ENCODE measurements at regions of chr12 and their contacts with region 1.

Region 1: DNA sequence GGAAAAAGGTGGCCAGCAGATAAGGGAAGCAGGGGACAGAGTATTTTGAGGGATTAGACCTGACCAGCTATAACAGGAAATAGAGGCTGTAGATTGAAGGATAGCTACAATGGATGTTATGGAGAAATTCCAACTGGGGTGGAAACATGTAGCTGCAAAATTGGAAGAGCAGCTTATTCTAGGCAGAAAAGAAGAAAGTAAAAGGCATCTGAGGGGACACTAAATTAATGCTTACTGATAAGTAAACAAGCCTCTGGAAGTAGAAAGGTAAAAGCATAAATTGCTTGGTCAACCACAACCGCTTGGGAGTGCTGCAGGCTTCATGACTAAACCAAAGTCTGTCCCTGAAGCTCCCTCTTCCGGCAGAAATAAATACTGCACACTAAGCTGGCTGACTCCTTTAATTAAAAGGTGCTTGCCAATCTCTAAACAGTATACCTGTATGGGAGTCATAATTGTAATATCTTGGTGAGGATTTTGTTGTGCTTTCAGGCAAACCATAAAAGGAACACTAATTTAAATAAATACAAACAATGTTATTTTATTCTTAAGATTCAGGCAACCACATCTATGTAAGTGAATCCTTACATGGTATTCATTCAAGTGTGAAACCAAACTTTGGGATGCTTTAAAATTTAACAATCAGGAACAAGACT is 7.7 kb downstream of the UBC start:
- DNase-seq: peak; percentile 90
- ATAC-seq: peak; percentile 56
- H3K4me3 ChIP-seq: no peak overlapping the region
- H3K27ac ChIP-seq: no peak overlapping the region
- H3K4me1 ChIP-seq: peaks cover 12% of the 10 kb centered on the region
- H3K27me3 ChIP-seq: no peaks in the 10 kb centered on the region
- CTCF ChIP-seq: peak; percentile 100
- POLR2A ChIP-seq: no peak
- RAD21 ChIP-seq: peak; percentile 92

Region 2: DNA sequence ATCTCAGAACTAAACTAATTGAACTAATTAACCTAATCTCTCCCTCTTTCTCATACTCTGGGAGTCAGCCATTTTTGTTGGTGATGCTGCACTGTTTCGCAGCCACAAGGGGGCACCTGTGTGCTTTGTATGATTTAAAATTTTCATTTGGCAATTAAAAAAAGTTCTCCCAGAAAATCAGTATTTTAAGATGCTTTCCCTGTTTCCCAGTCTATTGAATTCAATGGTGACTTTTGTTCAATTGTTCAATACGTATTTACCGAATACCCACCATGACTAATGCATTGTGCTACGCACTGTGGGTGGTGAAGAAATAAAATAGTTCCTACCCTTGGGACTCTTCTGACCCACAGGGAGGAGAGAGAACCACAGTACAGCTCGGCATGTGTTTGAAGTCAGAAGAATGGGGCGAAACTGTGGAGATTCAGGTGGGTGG is 870.0 kb before region 1 on chr12:
- CTCF ChIA-PET with region 1: interaction called, 3 read pairs
- POLR2A ChIA-PET with region 1: no interaction called
- dilution Hi-C with region 1: no loop called
- in situ Hi-C with region 1: loop called (anchors 5 kb)
- intact Hi-C with region 1: loop called (anchors 1 kb)
- DNase-seq: peak; percentile 44
- ATAC-seq: peak; percentile 62
- H3K4me3 ChIP-seq: no peak overlapping the region
- H3K27ac ChIP-seq: no peak overlapping the region
- H3K4me1 ChIP-seq: no peaks in the 10 kb centered on the region
- H3K27me3 ChIP-seq: no peaks in the 10 kb centered on the region
- CTCF ChIP-seq: peak; percentile 96
- POLR2A ChIP-seq: no peak
- RAD21 ChIP-seq: peak; percentile 90

Region 3: DNA sequence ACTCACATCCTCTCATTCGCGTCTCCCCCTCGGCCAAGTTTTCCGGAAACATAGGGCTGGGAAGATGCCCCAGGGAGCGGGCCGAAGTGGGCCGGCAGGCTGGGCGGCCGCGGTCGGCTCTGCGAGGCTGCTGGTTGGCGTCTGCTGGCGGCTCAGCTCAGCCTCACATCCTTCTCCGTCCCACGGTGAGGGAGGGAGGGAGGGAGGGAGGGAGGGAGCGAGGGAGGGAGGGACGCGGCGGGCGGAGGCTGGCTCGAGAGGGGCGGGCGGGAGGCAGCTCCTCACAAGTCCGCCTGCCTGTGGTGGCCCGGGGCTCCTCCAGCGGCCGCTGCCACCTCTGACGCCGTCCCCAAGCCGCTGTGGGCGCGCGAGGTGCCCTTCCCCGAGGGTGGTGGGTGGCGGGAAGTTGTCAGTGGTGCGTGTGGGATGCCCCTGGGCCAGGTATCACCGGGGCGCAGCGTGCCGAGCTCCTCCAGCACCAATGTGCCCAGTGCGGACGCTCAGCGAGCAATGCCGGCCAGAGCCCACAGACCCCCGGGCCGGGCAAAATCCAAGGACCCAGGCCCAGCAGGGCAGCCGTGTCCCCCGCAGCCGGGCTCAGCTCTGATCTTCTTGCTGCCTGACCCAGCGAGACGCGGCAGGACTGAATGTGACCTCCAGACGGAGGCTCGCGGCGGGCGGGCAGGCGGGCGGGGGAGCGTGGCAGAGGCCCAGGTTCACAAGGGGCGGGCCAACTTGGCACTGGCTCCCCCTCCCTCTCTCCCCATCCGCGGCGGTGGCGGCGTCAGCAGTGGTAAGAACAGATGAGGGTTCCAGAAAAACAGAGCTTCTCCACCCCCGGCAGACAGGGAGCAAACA is 517.8 kb before region 1 on chr12:
- CTCF ChIA-PET with region 1: no interaction called
- POLR2A ChIA-PET with region 1: no interaction called
- dilution Hi-C with region 1: no loop called
- in situ Hi-C with region 1: no loop called
- intact Hi-C with region 1: loop called (anchors 10 kb)
- DNase-seq: peak; percentile 85
- ATAC-seq: peak; percentile 65
- H3K4me3 ChIP-seq: peak overlapping the region; percentile 97
- H3K27ac ChIP-seq: peak overlapping the region; percentile 98
- H3K4me1 ChIP-seq: peaks cover 62% of the 10 kb centered on the region
- H3K27me3 ChIP-seq: no peaks in the 10 kb centered on the region
- CTCF ChIP-seq: no peak
- POLR2A ChIP-seq: peak; percentile 94
- RAD21 ChIP-seq: peak; percentile 9; the same call in 1 of the 2 replicates

Region 4: DNA sequence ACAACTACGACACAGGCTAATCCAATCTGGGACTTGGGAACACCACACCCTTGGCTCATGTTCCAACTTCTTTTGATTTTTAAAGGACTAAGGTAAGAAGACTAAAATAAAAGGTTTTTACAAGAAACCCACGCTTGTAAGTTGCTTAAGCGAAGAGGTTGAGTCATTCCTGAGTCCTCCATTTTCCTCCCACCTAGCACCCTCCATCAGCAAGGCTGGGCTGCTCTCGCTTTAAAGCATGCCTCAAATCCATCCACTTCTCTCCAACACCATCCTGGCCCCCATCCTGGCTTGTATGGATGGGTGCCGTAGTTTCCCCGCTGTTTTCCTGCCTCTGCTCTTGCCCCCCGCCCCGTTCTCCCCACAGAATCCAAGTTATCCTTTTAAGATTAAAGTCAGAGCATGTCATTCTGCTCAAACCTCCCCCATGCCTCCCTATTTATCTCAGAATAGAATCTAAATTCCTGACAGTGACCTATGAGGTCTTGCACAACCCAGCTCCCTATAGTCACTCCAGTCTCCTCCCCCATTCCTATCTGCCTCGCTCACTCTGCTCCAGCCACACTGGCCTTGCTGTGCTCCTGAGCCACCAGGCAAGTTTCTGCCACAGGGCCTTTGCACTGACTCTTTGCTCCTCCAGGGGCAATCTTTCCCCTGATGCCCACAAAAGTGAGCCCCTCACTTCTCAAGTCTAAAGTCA is 77.6 kb before region 1 on chr12:
- CTCF ChIA-PET with region 1: interaction called, 3 read pairs
- POLR2A ChIA-PET with region 1: no interaction called
- dilution Hi-C with region 1: no loop called
- in situ Hi-C with region 1: no loop called
- intact Hi-C with region 1: loop called (anchors 10 kb)
- DNase-seq: peak; percentile 85
- ATAC-seq: peak; percentile 84
- H3K4me3 ChIP-seq: no peak overlapping the region
- H3K27ac ChIP-seq: peak overlapping the region; percentile 72
- H3K4me1 ChIP-seq: peaks cover 11% of the 10 kb centered on the region
- H3K27me3 ChIP-seq: no peaks in the 10 kb centered on the region
- CTCF ChIP-seq: no peak
- POLR2A ChIP-seq: no peak
- RAD21 ChIP-seq: no peak

Region 5: DNA sequence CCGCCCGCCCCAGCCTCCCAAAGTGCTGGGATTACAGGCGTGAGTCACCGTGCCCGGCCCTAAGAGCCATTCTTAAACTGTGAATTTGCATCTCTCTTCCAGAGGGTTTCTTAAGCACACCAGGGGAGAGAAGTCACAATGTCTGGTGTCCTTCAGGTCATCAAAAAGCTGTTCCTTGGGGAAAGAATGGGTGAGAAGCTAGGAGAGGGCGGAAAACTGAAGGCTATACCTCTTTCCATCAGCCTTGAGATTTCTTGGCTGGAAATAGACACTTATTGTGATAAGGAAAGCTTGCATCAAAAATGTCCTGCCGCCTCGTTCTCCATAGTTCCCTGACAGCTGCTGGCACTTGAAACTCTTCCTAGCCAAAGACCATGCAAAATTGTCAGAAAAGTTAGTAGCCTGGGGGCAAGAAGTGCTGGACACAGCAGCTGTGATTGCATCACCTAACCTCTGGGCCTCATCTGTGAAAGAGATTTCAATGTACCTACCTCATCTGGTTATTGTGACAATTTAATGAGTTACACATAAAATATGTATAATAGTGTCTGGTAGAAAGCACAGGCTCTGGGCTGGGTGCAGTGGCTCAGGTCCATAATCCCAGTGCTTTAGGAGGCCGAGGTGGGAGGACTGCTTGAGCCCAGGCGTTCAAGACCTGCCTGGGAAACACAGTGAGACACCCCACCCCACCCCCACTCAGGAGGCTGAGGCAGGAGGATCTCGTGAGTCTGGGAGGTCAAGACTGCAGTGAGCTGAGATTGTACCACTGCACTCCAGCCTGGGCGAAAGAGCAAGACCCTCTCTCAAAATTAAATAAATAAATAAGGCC is 17.4 kb after region 1 on chr12:
- CTCF ChIA-PET with region 1: interaction called, 10 read pairs
- POLR2A ChIA-PET with region 1: interaction called, 10 read pairs
- dilution Hi-C with region 1: no loop called
- in situ Hi-C with region 1: no loop called
- intact Hi-C with region 1: no loop called
- DNase-seq: peak; percentile 82
- ATAC-seq: peak; percentile 7; the same call in 1 of the 2 replicates
- H3K4me3 ChIP-seq: peak overlapping the region; percentile 2; the same call in 1 of the 2 replicates
- H3K27ac ChIP-seq: peak overlapping the region; percentile 75
- H3K4me1 ChIP-seq: peaks cover 17% of the 10 kb centered on the region
- H3K27me3 ChIP-seq: no peaks in the 10 kb centered on the region
- CTCF ChIP-seq: no peak
- POLR2A ChIP-seq: no peak
- RAD21 ChIP-seq: no peak

Measured in IMR-90 (cell line).